Activated naive CD4-positive, alpha-beta T cell treated with anti-CD3 and anti-CD28 coated beads for 36 hours (primary cell): ENCODE measurements at regions of chr5 and their contacts with region 1.

Region 1: GRCh38 chr5:172188033-172188892 is at the start of gene STK10:
- DNase-seq: peak; percentile 92
- H3K4me3 Mint-ChIP-seq: peak within 1 kb of the TSS; percentile 91
- H3K27ac Mint-ChIP-seq: peak within 1 kb of the TSS; percentile 92
- H3K4me1 Mint-ChIP-seq: peaks cover 32% of the 10 kb centered on the region
- H3K27me3 Mint-ChIP-seq: no peaks in the 10 kb centered on the region
- total RNA-seq, gene STK10: 44.7 to 55.1 TPM

Region 2: GRCh38 chr5:171961117-171961516 is 227.1 kb before region 1 on chr5:
- CTCF ChIA-PET with region 1: interaction called, 4 read pairs
- intact Hi-C with region 1: loop called (anchors 2 kb)
- DNase-seq: peak; percentile 65
- H3K4me3 Mint-ChIP-seq: no peak overlapping the region
- H3K27ac Mint-ChIP-seq: peak overlapping the region; percentile 57
- H3K4me1 Mint-ChIP-seq: peaks cover 89% of the 10 kb centered on the region
- H3K27me3 Mint-ChIP-seq: no peaks in the 10 kb centered on the region

Region 3: DNA sequence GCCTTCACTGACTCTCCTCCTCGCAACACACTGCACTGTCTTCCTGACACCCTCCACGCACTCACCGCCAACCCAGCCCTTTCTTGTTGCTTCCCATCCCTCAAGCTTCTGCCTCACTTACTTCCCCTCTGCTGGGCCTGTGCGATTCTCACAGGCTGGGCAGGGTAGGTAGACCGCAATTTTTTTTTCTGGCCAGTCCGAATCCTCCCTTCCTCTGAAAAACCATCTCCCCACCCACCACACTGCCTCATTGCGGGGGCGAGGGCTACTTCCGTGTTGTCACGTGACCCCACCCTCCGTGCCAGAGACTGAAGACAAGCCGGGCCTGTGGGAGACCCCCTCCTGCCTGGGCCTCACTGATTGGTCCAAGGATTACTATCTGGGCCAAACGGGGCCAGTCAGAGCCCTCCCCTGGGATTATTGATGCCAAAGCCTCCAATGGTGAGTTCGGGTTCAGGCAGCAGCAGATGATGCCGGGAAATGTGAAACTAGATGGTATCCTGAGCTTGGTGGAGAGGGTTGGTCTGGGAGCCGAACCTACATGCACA is 73.3 kb before region 1 on chr5:
- CTCF ChIA-PET with region 1: interaction called, 159 read pairs
- intact Hi-C with region 1: loop called (anchors 1 kb)
- DNase-seq: peak; percentile 93
- H3K4me3 Mint-ChIP-seq: peak overlapping the region; percentile 86
- H3K27ac Mint-ChIP-seq: peak overlapping the region; percentile 94
- H3K4me1 Mint-ChIP-seq: peaks cover 69% of the 10 kb centered on the region
- H3K27me3 Mint-ChIP-seq: no peaks in the 10 kb centered on the region

Region 4: GRCh38 chr5:172223901-172224873 is 35.9 kb after region 1 on chr5:
- CTCF ChIA-PET with region 1: interaction called, 5 read pairs
- intact Hi-C with region 1: loop called (anchors 2 kb)
- DNase-seq: peak; percentile 70
- H3K4me3 Mint-ChIP-seq: peak overlapping the region; percentile 11
- H3K27ac Mint-ChIP-seq: peak overlapping the region; percentile 37
- H3K4me1 Mint-ChIP-seq: peaks cover 30% of the 10 kb centered on the region
- H3K27me3 Mint-ChIP-seq: no peaks in the 10 kb centered on the region

Region 5: GRCh38 chr5:172293054-172293744 is 104.9 kb after region 1 on chr5:
- CTCF ChIA-PET with region 1: interaction called, 16 read pairs
- intact Hi-C with region 1: loop called (anchors 1 kb)
- DNase-seq: peak; percentile 76
- H3K4me3 Mint-ChIP-seq: no peak overlapping the region
- H3K27ac Mint-ChIP-seq: no peak overlapping the region
- H3K4me1 Mint-ChIP-seq: no peaks in the 10 kb centered on the region
- H3K27me3 Mint-ChIP-seq: peaks cover 3% of the 10 kb centered on the region

Region 6: GRCh38 chr5:172315587-172316493 is 127.6 kb after region 1 on chr5:
- CTCF ChIA-PET with region 1: no interaction called
- intact Hi-C with region 1: no loop called
- DNase-seq: no peak
- H3K4me3 Mint-ChIP-seq: no peak overlapping the region
- H3K27ac Mint-ChIP-seq: no peak overlapping the region
- H3K4me1 Mint-ChIP-seq: no peaks in the 10 kb centered on the region
- H3K27me3 Mint-ChIP-seq: no peaks in the 10 kb centered on the region